ENCODE measurements at regions of chr6 and their contacts with region 1.

Region 1: GRCh38 chr6:28080631-28081485 is 490 bp downstream of the ZNF165 start:
- ATAC-seq: peak; percentile 93 to 96 (median 95)
- H3K4me3 ChIP-seq: peak overlapping the region; percentile 54 to 99 (median 82)
- H3K27ac ChIP-seq: peak overlapping the region; percentile 87 to 91
- H3K4me1 ChIP-seq: peaks cover 0 to 4% of the 10 kb centered on the region in 2 donors

Region 2: GRCh38 chr6:27295301-27296081 is 785.4 kb before region 1 on chr6:
- in situ Hi-C with region 1: no loop called
- ATAC-seq: peak in 5 of 8 experiments; percentile 63 to 77 (median 68)
- H3K4me3 ChIP-seq: peak overlapping the region in 2 of 5 donors; percentile 18 to 41
- H3K27ac ChIP-seq: no peak overlapping the region
- H3K4me1 ChIP-seq: peaks cover 0 to 5% of the 10 kb centered on the region in 2 donors

Region 3: GRCh38 chr6:27332692-27333641 is 747.9 kb before region 1 on chr6:
- in situ Hi-C with region 1: no loop called
- ATAC-seq: peak in 6 of 8 experiments; percentile 82 to 94 (median 91)
- H3K4me3 ChIP-seq: peak overlapping the region in 4 of 5 donors; percentile 13 to 49 (median 28)
- H3K27ac ChIP-seq: no peak overlapping the region
- H3K4me1 ChIP-seq: no peaks in the 10 kb centered on the region

Region 4: GRCh38 chr6:27902335-27903314 is 178.2 kb before region 1 on chr6:
- in situ Hi-C with region 1: loop called in 1 of 9 experiments (anchors 25 kb)
- ATAC-seq: peak; percentile 85 to 94 (median 90)
- H3K4me3 ChIP-seq: peak overlapping the region; percentile 49 to 92 (median 62)
- H3K27ac ChIP-seq: peak overlapping the region; percentile 83 to 95
- H3K4me1 ChIP-seq: no peaks in the 10 kb centered on the region

Measured in motor neuron (in vitro differentiated cells).